Heart right ventricle (tissue), 16 donors: ENCODE measurements at regions of chr1 and their contacts with region 1.

Region 1: GRCh38 chr1:33633019-33633801 is 160.8 kb downstream of the ZSCAN20 start:
- DNase-seq: peak; percentile 81 to 90
- ATAC-seq: peak; percentile 59 to 91 (median 85)
- H3K4me3 ChIP-seq: no peak overlapping the region
- H3K27ac ChIP-seq: no peak overlapping the region
- H3K4me1 ChIP-seq: peaks cover 0 to 7% (median 0%) of the 10 kb centered on the region in 9 donors
- H3K27me3 ChIP-seq: peaks cover 0 to 26% (median 0%) of the 10 kb centered on the region in 7 donors
- CTCF ChIP-seq: peak; percentile 88 to 100 (median 99)

Region 2: DNA sequence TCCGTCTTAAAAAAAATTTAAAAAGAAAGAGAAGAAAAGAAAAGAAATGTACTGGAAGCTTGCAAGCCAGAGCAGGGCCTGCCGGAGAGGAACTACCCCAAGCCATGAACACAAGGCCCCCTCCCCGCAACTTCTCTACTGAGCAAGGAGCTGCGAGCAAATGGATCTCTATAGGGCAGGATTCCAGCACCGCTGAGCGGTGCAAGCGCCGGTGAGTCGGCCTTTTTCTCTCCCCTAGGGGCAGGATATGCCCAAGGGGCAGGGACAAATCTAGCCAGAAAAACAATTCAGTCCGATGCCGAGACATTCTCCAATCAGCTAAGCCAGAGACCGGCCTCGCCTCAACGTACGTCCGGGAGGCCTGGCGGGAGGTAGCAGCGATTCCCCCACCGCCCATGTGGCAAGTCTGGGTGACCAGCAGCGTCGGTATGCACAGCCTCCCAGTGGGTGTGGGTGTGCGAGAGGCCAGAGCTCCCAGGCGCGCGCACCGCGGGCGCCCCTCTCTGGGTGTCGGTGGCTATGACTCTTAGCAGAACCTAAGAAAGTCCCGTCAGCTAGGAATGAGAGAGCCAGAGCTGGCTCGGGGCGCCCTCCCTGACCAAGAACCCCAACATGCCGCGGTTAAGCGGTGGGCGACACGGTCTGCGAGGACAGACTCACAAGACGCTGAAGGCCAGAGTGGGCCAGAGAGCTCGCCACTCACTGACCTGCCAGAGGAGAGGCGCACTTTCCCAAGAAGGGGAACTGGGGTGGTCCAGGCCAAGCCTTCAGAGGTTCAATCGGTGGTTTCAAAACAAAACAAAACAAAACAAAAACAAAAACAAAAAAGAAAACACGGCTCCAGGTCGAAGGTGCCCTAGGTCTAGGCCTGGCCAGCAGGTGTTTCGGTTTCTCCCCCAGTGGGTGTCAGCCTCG is 529.9 kb after region 1 on chr1:
- intact Hi-C with region 1: loop called in 2 of 10 experiments (anchors 5 to 10 kb)
- DNase-seq: peak; percentile 31 to 50
- ATAC-seq: peak; percentile 85 to 95 (median 92)
- H3K4me3 ChIP-seq: peak overlapping the region; percentile 6 to 51 (median 43)
- H3K27ac ChIP-seq: no peak overlapping the region
- H3K4me1 ChIP-seq: peaks cover 5 to 35% (median 23%) of the 10 kb centered on the region in 9 donors
- H3K27me3 ChIP-seq: peaks cover 7 to 88% (median 85%) of the 10 kb centered on the region in 7 donors
- CTCF ChIP-seq: peak; percentile 14 to 72 (median 62)

Region 3: DNA sequence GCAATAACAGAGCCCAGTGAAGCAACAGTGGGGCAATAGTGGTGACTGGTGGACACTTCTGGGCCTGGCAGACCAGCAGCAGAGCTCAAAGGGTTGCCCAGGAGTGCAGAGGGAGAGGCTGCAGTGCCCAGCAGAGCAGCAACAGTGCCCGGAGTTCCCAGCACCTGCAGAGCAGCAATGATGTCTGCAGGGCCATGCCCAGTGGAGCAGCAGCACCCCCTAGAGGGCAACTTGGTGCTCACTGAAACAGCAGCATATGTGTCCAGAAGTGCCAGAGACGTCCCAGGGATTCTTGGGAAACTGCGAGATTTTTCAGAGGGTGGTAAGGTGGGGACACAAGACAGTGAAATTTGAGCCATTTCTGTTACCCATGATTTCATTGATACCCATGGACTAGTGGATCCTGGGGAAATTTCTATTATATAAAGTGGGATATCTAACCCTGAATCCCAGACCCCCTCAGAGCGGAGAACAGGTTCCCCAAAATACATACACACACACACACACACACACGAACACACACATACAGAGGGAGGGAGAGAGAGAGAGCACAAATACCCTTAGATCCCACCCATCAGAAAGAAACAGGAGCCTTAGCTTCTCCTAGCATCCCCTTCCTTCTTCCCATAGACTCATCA is 964.8 kb after region 1 on chr1:
- intact Hi-C with region 1: loop called in 6 of 10 experiments (anchors 5 to 10 kb)
- DNase-seq: peak; percentile 29 to 54
- ATAC-seq: peak in 6 of 8 donors; percentile 49 to 75 (median 62)
- H3K4me3 ChIP-seq: no peak overlapping the region
- H3K27ac ChIP-seq: no peak overlapping the region
- H3K4me1 ChIP-seq: no peaks in the 10 kb centered on the region
- H3K27me3 ChIP-seq: peaks cover 0 to 47% (median 24%) of the 10 kb centered on the region in 7 donors
- CTCF ChIP-seq: peak; percentile 33 to 75 (median 69)

Region 4: DNA sequence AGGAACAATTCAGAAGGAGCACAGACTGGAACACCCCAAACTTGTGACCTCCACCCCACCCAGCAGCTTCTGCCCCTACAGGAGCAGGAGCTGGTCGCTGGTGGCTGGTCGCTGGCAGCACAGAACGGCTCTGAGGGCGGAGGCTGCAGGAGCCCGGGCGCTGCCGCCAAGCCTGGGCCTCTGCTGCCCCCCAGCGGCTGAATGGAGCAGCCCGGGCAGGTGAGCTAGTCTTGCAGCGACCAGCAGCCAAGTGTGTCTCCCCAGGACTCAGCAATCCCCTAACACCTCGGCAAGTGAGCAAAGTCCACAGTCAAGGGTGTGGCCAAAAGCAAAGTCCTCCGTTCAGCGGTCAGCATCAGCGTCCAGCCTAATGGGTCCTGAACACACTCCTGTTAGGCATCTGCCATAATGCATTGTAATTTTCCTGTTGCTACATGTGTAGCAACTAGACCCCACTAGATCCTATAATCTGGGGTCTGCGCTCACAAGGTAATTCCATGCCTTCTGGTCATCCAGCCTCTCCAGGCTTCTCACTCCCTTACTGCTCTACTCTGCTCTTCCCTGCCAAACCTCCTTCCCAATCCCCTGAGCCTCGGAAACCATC is 1109.6 kb after region 1 on chr1:
- intact Hi-C with region 1: loop called in 9 of 10 experiments (anchors 2 to 10 kb)
- DNase-seq: peak; percentile 65 to 80
- ATAC-seq: peak; percentile 82 to 92 (median 88)
- H3K4me3 ChIP-seq: no peak overlapping the region
- H3K27ac ChIP-seq: no peak overlapping the region
- H3K4me1 ChIP-seq: peaks cover 0 to 4% (median 0%) of the 10 kb centered on the region in 9 donors
- H3K27me3 ChIP-seq: peaks cover 0 to 42% (median 23%) of the 10 kb centered on the region in 7 donors
- CTCF ChIP-seq: peak; percentile 89 to 97 (median 95)